Right ventricle myocardium inferior (tissue), 1 donor: ENCODE measurements at regions of chr2 and their contacts with region 1.

Region 1: DNA sequence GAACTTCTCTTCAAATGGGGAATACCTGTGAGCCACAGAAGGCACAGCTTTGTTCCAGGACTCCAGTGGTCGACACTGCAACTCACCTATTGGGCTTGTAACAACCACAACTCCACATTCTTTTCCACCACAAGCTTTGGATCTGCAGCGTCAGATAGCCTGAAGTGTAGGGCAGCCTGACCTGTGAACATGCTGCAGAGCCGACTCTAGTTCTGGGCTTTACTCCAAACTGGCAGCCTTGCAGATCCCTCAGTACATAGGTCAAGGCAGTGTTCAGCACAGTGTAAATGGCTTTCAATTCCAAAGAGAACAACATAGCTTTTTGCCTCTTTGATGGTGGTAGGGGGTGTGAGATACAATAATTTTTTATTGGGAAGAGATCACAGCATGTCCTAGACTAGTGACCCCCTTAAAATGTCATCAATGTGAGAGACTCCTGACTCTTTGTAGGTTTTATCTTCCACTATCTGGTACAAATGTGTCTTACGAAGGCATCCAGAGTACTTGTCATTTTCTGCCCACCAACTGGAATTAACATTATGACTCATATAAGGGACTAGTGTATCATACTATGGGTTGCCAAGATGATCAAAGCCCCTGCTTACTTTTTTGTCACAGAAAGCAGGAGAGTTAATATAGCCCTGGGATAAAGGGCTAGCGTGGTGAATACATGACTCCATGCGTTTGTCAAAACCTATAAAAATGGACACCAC is 149.8 kb downstream of the COPS8 start:
- DNase-seq: peak; percentile 77
- ATAC-seq: peak; percentile 94

Region 2: DNA sequence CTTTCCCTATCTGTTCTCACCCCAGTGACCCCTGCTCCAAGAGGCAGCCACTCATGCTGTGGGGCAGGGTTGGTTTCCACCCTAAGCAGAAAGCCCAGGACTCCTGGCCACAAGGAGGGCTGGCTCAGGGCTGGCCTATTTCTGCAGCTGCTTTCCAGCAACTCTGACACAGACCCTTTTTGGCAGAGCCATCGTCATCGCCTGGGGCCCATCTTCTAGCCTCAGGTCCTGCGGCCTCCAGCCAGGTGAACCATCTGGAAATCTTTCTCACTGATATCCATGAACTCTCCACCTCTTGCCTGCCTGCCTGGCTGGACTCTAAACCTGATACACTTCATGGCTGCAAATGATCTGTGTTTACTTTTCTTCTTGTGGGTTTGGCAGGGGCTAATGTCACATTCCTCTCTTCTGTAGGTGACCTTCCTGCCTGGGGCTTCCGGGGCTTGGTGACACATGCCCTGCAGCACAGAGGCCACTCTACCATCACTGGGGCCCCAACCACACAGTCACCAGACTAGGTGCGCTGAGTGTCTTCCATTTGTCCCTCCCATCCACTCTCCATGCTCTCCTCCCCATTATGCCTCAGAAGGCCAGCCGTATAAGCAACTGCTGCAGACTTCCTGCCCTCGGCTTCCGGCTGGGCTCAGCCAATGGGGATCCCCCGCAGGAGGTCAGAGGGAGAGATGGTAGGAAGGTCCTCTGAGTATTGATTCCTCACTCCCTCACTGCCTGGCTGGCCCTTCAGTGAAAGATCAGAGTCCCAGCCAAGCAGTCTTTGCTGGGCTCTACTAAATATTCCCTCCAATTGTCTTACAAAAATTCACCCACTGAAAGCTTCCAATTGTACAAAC is 159.6 kb before region 1 on chr2:
- intact Hi-C with region 1: no loop called
- DNase-seq: no peak
- ATAC-seq: no peak

Region 3: GRCh38 chr2:237207646-237208045 is 27.9 kb before region 1 on chr2:
- intact Hi-C with region 1: loop called (anchors 2 kb)
- DNase-seq: peak; percentile 91
- ATAC-seq: peak; percentile 90